ENCODE measurements at regions of chr4 and their contacts with region 1.

Region 1: DNA sequence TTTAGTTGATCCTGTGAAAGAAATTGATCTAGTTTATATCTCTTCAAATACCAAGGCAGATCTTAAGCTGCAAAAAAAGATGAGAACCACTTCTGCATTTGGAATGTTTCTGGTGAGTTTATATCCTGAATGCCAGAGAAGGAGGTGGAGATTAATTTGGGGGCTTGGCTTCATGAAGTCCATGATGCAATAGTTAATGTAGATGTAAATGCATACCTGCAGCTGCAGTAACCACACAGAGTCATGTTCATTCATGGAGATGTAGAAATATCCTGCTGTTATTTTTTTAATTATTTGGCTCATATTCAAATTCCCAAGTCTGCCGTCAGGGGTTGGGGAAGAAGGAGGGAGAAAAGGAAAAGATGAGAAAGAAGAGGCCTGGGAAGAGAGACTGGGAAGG is at the start of gene SULT1E1:
- DNase-seq: peak; percentile 89
- H3K4me3 ChIP-seq: peak within 1 kb of the TSS; percentile 31 to 53 (median 53)
- H3K27ac ChIP-seq: peak within 1 kb of the TSS; percentile 78
- H3K4me1 ChIP-seq: peaks cover 22% of the 10 kb centered on the region
- H3K27me3 ChIP-seq: no peaks in the 10 kb centered on the region
- CTCF ChIP-seq: no peak
- total RNA-seq, gene SULT1E1: 4.8 to 18.2 TPM

Region 2: GRCh38 chr4:69787879-69788278 is 72.2 kb before region 1 on chr4:
- CTCF ChIA-PET with region 1: no interaction called
- dilution Hi-C with region 1: no loop called
- in situ Hi-C with region 1: no loop called
- intact Hi-C with region 1: no loop called
- DNase-seq: peak; percentile 88
- H3K4me3 ChIP-seq: no peak overlapping the region
- H3K27ac ChIP-seq: peak overlapping the region; percentile 27
- H3K4me1 ChIP-seq: peaks cover 13% of the 10 kb centered on the region
- H3K27me3 ChIP-seq: no peaks in the 10 kb centered on the region
- CTCF ChIP-seq: no peak

Region 3: DNA sequence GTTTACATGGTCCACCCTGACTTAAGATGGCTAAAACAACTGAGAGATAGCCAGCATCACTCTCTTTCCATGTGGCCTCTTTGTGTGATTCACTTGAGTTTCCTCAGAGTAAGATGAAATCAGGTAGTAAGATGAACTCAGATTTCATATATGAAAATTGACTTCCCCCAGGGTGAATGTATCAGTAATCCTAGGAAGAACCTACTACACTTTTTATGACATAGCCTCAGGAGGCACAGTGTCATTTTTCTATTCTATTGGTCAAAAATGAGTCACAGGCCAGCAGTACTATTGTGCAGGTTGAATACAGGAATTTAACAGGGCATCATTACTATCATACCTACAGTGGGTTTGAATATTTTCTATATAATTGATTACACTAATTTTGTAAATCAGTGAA is 14.5 kb after region 1 on chr4:
- CTCF ChIA-PET with region 1: no interaction called
- dilution Hi-C with region 1: no loop called
- in situ Hi-C with region 1: no loop called
- intact Hi-C with region 1: loop called (anchors 1 kb)
- DNase-seq: peak; percentile 54
- H3K4me3 ChIP-seq: no peak overlapping the region
- H3K27ac ChIP-seq: no peak overlapping the region
- H3K4me1 ChIP-seq: no peaks in the 10 kb centered on the region
- H3K27me3 ChIP-seq: no peaks in the 10 kb centered on the region
- CTCF ChIP-seq: no peak